ENCODE measurements at regions of chr20 and their contacts with region 1.

Region 1: GRCh38 chr20:6142348-6142993 is 19.6 kb upstream of the FERMT1 start:
- DNase-seq: peak; percentile 12
- H3K4me3 Mint-ChIP-seq: no peak overlapping the region
- H3K27ac Mint-ChIP-seq: no peak overlapping the region
- H3K4me1 Mint-ChIP-seq: peaks cover 2% of the 10 kb centered on the region
- H3K27me3 Mint-ChIP-seq: no peaks in the 10 kb centered on the region

Region 2: DNA sequence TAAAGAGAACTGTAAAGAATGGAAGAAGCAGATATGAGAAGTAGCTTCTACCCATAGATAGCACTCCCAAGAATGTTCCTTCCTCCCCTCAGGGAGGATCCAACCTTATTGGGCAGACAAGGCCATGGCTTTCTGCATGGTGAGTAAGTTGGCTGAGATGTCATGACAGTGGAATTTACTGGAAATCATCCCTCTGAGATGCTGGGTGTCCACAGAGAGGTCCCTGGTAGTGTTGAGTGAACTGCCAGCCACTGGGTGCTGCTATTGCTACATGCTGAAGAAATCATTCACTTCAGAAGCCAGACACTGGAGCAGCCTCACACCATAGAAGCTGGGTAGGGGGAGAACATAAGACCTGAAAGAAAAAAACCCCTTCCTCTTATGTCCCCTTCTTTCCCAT is 26.8 kb after region 1 on chr20:
- intact Hi-C with region 1: no loop called
- DNase-seq: no peak
- H3K4me3 Mint-ChIP-seq: no peak overlapping the region
- H3K27ac Mint-ChIP-seq: no peak overlapping the region
- H3K4me1 Mint-ChIP-seq: no peaks in the 10 kb centered on the region
- H3K27me3 Mint-ChIP-seq: no peaks in the 10 kb centered on the region

Region 3: DNA sequence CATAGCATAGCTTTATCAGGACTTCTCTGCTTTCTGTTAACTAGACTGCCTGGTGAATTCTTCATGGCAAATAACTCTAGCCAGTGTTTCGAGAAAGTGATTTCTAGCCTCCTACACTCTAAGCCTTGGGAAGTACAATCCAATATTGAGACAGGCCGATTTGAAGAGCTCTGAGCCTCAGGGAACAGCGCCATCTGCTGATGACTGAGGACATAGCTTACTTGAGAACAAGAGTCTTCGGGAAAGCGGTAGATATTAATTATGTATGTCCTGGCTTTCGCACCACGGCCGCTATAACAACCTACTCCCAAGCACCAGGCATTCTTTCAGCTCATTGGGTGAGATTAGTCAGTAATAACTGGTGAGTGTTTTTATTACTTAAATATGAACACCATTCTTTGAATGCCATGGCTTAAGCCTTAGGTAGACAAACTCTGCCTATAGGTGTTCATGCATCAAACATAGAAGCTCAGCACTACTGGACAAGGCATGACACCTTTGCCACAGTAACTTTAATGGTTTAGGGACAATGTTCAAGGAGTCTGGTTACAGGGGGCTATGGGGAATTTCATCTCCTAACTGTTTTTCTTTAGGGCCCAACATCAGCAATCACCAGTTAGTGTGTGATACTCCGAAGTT is 1143.6 kb after region 1 on chr20:
- intact Hi-C with region 1: loop called (anchors 5 kb)
- DNase-seq: peak; percentile 9
- H3K4me3 Mint-ChIP-seq: no peak overlapping the region
- H3K27ac Mint-ChIP-seq: no peak overlapping the region
- H3K4me1 Mint-ChIP-seq: no peaks in the 10 kb centered on the region
- H3K27me3 Mint-ChIP-seq: no peaks in the 10 kb centered on the region